Naive thymus-derived CD4-positive, alpha-beta T cell (primary cell): ENCODE measurements at regions of chr5 and their contacts with region 1.

Region 1: GRCh38 chr5:96942911-96943310 is 7.0 kb downstream of the LNPEP start:
- DNase-seq: no peak
- ATAC-seq: no peak
- H3K4me3 ChIP-seq: no peak overlapping the region
- H3K4me3 Mint-ChIP-seq: peak overlapping the region in 2 of 10 donors; percentile 23 to 34
- H3K27ac ChIP-seq: peak overlapping the region; percentile 52
- H3K27ac Mint-ChIP-seq: peak overlapping the region in 5 of 9 donors; percentile 16 to 89 (median 65)
- H3K4me1 ChIP-seq: peaks cover 24 to 51% of the 10 kb centered on the region in 2 donors
- H3K4me1 Mint-ChIP-seq: peaks cover 53 to 97% (median 88%) of the 10 kb centered on the region in 7 donors
- H3K27me3 ChIP-seq: no peaks in the 10 kb centered on the region
- H3K27me3 Mint-ChIP-seq: no peaks in the 10 kb centered on the region

Region 2: GRCh38 chr5:96957254-96958049 is 14.5 kb after region 1 on chr5:
- CTCF ChIA-PET with region 1: interaction called, 3 read pairs
- POLR2A ChIA-PET with region 1: interaction called, 9 read pairs
- intact Hi-C with region 1: loop called in 1 of 2 experiments (anchors 1 kb)
- DNase-seq: no peak
- ATAC-seq: peak; percentile 23
- H3K4me3 ChIP-seq: peak overlapping the region; percentile 2
- H3K4me3 Mint-ChIP-seq: peak overlapping the region in 9 of 10 donors; percentile 42 to 77 (median 65)
- H3K27ac ChIP-seq: peak overlapping the region; percentile 48
- H3K27ac Mint-ChIP-seq: peak overlapping the region; percentile 75 to 97 (median 89)
- H3K4me1 ChIP-seq: peaks cover 44 to 68% of the 10 kb centered on the region in 2 donors
- H3K4me1 Mint-ChIP-seq: peaks cover 42 to 91% (median 82%) of the 10 kb centered on the region in 7 donors
- H3K27me3 ChIP-seq: no peaks in the 10 kb centered on the region
- H3K27me3 Mint-ChIP-seq: no peaks in the 10 kb centered on the region

Region 3: GRCh38 chr5:97788369-97788768 is 845.5 kb after region 1 on chr5:
- CTCF ChIA-PET with region 1: no interaction called
- POLR2A ChIA-PET with region 1: no interaction called
- intact Hi-C with region 1: no loop called
- DNase-seq: no peak
- ATAC-seq: no peak
- H3K4me3 ChIP-seq: no peak overlapping the region
- H3K4me3 Mint-ChIP-seq: no peak overlapping the region
- H3K27ac ChIP-seq: no peak overlapping the region
- H3K27ac Mint-ChIP-seq: no peak overlapping the region
- H3K4me1 ChIP-seq: no peaks in the 10 kb centered on the region
- H3K4me1 Mint-ChIP-seq: no peaks in the 10 kb centered on the region
- H3K27me3 ChIP-seq: no peaks in the 10 kb centered on the region
- H3K27me3 Mint-ChIP-seq: no peaks in the 10 kb centered on the region